Heart left ventricle (tissue), 16 donors: ENCODE measurements at regions of chr17 and their contacts with region 1.

Region 1: GRCh38 chr17:27446569-27447301 is 9.5 kb upstream of the KSR1 start:
- DNase-seq: no peak
- ATAC-seq: peak in 1 of 4 donors; percentile 61
- H3K4me3 ChIP-seq: no peak overlapping the region
- H3K27ac ChIP-seq: no peak overlapping the region
- H3K4me1 ChIP-seq: peaks cover 0 to 9% (median 0%) of the 10 kb centered on the region in 12 donors
- H3K27me3 ChIP-seq: no peaks in the 10 kb centered on the region
- CTCF ChIP-seq: no peak
- POLR2A ChIP-seq: no peak

Region 2: DNA sequence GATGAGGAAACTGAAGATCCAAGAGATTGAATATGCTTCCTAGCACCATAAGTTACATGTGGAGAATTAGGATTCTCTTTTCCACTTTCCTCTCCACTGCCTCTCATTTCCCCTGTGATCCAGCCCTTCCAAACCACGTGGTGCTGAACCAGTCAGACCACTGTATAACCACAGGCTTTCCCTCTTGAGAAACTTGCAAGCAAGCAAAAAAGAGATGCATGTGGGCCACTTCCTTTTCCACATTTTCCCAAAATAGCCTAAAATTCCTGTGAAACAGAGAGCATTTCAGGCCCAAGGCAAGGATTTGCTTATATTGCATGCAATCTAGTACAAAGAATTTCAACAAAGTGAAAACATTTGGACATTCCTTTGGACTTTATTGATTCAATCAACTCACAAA is 49.8 kb before region 1 on chr17:
- intact Hi-C with region 1: loop called in 2 of 10 experiments (anchors 10 kb)
- DNase-seq: no peak
- ATAC-seq: peak in 2 of 4 donors; percentile 51 to 61
- H3K4me3 ChIP-seq: no peak overlapping the region
- H3K27ac ChIP-seq: no peak overlapping the region
- H3K4me1 ChIP-seq: peaks cover 0 to 13% (median 0%) of the 10 kb centered on the region in 12 donors
- H3K27me3 ChIP-seq: no peaks in the 10 kb centered on the region
- CTCF ChIP-seq: no peak
- POLR2A ChIP-seq: no peak